ENCODE measurements at regions of chr3 and their contacts with region 1.

Region 1: DNA sequence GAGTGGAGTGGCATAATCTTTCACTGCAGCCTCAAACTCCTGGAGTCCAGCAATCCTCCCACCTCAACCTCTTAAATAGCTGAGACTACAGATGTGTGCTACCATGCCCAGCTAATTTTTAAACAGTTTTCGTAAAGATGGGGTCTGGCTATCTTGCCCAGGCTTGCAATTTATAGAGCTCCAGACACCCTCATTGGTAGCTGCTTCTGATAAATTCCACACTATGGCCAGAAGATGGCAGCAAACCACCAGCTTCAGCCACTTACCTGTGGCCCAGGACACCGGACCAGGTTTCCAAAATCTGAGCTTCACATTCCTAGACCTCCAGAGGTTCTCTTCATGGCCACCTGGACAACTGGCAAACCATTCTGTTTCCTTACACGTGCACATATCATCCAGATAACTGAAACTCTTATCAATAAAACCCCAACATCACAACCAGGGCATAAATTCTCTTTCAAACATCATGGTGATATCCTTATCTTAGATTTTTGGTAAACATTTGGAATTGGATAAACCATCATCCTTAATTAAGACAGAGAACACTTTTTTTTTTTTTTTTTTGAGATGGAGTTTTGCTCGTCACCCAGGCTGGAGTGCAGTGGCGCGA is 28.9 kb downstream of the FBXW12 start:
- DNase-seq: peak; percentile 85
- H3K4me3 ChIP-seq: no peak overlapping the region
- H3K27ac ChIP-seq: peak overlapping the region; percentile 88 to 96 (median 89)
- H3K4me1 ChIP-seq: peaks cover 0 to 28% (median 23%) of the 10 kb centered on the region in 4 donors
- H3K27me3 ChIP-seq: no peaks in the 10 kb centered on the region
- CTCF ChIP-seq: peak; percentile 83 to 96 (median 86)
- EP300 ChIP-seq: no peak
- POLR2A ChIP-seq: no peak

Region 2: GRCh38 chr3:48273594-48274211 is 127.2 kb before region 1 on chr3:
- intact Hi-C with region 1: loop called (anchors 5 kb)
- DNase-seq: peak; percentile 66
- H3K4me3 ChIP-seq: no peak overlapping the region
- H3K27ac ChIP-seq: no peak overlapping the region
- H3K4me1 ChIP-seq: peaks cover 0 to 9% (median 0%) of the 10 kb centered on the region in 4 donors
- H3K27me3 ChIP-seq: no peaks in the 10 kb centered on the region
- CTCF ChIP-seq: peak; percentile 31 to 77 (median 68)
- EP300 ChIP-seq: no peak
- POLR2A ChIP-seq: no peak